ENCODE measurements at regions of chr5 and their contacts with region 1.

Region 1: GRCh38 chr5:136141561-136141960 is 8.9 kb downstream of the SMAD5 start:
- DNase-seq: no peak
- H3K4me3 ChIP-seq: no peak overlapping the region
- H3K27ac ChIP-seq: no peak overlapping the region
- H3K4me1 ChIP-seq: no peaks in the 10 kb centered on the region
- H3K27me3 ChIP-seq: no peaks in the 10 kb centered on the region
- CTCF ChIP-seq: no peak
- POLR2A ChIP-seq: no peak

Region 2: DNA sequence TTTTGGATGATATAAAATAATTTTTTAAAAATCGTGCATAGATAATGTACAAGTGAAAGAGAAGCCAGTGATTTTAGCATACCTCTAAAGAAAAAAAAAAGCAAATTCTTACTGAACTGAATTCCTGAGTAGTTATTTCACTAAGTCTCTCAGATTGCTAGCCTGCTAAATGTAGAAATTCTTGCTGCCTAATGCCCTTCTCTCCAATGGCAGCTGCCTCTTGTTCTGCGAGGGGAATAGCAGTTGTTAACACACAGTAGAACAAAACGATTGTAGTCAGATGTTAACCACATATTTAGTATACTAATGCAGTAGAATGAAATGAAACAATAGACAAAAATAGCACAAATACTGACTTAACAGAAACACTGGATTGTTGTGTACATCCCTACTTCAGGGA is 17.9 kb after region 1 on chr5:
- CTCF ChIA-PET with region 1: interaction called, 3 read pairs
- POLR2A ChIA-PET with region 1: no interaction called
- dilution Hi-C with region 1: no loop called
- intact Hi-C with region 1: loop called (anchors 2 kb)
- DNase-seq: no peak
- H3K4me3 ChIP-seq: no peak overlapping the region
- H3K27ac ChIP-seq: no peak overlapping the region
- H3K4me1 ChIP-seq: no peaks in the 10 kb centered on the region
- H3K27me3 ChIP-seq: no peaks in the 10 kb centered on the region
- CTCF ChIP-seq: no peak
- POLR2A ChIP-seq: no peak

Region 3: GRCh38 chr5:136295914-136296313 is 154.4 kb after region 1 on chr5:
- CTCF ChIA-PET with region 1: no interaction called
- POLR2A ChIA-PET with region 1: no interaction called
- dilution Hi-C with region 1: no loop called
- intact Hi-C with region 1: no loop called
- DNase-seq: no peak
- H3K4me3 ChIP-seq: no peak overlapping the region
- H3K27ac ChIP-seq: no peak overlapping the region
- H3K4me1 ChIP-seq: no peaks in the 10 kb centered on the region
- H3K27me3 ChIP-seq: peaks cover 0 to 7% of the 10 kb centered on the region in 2 experiments
- CTCF ChIP-seq: no peak
- POLR2A ChIP-seq: no peak

Measured in endothelial cell of umbilical vein (primary cell).